Heart right ventricle (tissue), 16 donors: ENCODE measurements at regions of chr7 and their contacts with region 1.

Region 1: GRCh38 chr7:156969972-156970420 is 20.5 kb downstream of the NOM1 start:
- DNase-seq: no peak
- ATAC-seq: peak in 1 of 8 donors; percentile 40
- H3K4me3 ChIP-seq: no peak overlapping the region
- H3K27ac ChIP-seq: no peak overlapping the region
- H3K4me1 ChIP-seq: no peaks in the 10 kb centered on the region
- H3K27me3 ChIP-seq: no peaks in the 10 kb centered on the region
- CTCF ChIP-seq: peak in 8 of 9 donors; percentile 16 to 55 (median 43)

Region 2: DNA sequence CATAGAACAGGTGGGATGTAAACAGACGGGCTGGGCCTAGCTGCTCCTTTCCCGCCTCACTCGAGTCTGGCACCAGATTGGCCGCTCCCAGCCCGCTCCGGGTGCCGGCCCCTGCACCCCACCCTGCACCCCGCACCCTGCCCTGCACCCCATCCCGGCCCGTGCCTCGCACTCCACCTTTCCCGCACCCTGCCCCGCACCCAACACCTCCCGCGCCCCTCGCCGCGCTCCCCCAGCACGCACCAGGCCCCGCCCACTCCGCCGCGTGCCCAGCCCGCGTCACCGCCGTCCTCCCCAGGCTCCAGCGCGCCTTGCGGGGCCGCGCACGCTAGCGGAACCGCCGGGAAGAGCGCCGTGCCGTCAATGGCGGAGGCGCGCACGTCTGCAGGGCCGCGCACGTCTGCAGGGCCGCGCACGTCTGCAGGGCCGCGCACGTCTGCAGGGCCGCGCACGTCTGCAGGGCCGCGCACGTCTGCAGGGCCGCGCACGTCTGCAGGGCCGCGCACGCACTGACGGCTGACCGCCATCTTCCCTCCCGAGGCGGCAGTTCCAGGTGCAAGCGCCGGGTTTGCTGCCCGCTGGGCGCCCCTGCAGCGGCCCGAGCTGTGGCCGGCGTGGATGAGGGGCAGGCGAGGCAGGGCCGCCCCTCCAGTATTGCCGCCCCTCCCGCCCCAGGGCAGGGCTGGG is 168.6 kb after region 1 on chr7 and contains the start of gene UBE3C:
- intact Hi-C with region 1: loop called in 1 of 10 experiments (anchors 10 kb)
- DNase-seq: peak; percentile 90 to 94
- ATAC-seq: peak; percentile 95 to 97 (median 96)
- H3K4me3 ChIP-seq: peak within 1 kb of the TSS; percentile 64 to 89 (median 82)
- H3K27ac ChIP-seq: peak within 1 kb of the TSS; percentile 80 to 96 (median 88)
- H3K4me1 ChIP-seq: peaks cover 4 to 46% (median 29%) of the 10 kb centered on the region in 9 donors
- H3K27me3 ChIP-seq: no peaks in the 10 kb centered on the region
- CTCF ChIP-seq: peak in 2 of 9 donors; percentile 8 to 10
- total RNA-seq, gene UBE3C: 39.0 to 53.8 (median 49.1) TPM

Region 3: DNA sequence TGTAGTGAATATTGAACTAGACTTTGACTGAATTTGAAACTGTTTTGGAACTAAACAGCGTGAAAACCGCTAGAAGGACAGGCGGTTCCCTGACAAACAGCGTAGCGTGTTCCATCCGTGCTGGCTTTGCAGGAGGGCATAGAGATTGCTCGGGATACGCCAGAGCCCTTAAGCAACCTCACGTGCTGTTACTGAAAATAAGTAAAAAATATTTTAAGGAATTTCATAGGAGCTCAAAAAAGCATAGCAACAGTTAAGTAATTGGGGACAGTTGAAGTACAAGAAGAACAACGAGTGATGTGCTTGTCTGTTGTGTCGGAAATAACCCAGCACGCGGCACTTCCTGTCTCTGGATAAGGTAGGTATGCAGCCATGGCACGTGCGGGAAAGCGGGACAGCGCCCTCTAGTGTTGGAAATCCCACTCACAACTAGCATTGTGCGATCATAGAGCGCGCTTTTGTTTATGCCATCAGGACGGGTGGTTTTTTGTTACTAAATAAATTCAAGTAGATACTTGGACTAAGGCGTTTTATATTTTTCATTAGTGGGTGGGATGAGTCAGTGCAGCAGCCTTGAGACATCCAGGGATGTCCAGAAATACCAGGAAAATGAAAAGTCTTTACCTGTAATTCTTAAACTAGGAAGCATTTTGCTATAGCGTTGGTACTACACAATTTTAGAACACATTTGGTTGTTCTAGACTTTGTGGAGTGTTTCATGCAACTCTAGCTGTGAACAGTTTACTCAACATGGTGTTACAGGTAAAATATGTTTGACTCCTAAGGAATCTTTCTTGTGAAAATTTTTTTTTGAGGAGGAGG is 417.2 kb after region 1 on chr7:
- intact Hi-C with region 1: loop called in 1 of 10 experiments (anchors 10 kb)
- DNase-seq: peak; percentile 79 to 89
- ATAC-seq: peak; percentile 76 to 93 (median 88)
- H3K4me3 ChIP-seq: no peak overlapping the region
- H3K27ac ChIP-seq: peak overlapping the region; percentile 28 to 76 (median 58)
- H3K4me1 ChIP-seq: peaks cover 0 to 59% (median 44%) of the 10 kb centered on the region in 9 donors
- H3K27me3 ChIP-seq: no peaks in the 10 kb centered on the region
- CTCF ChIP-seq: peak; percentile 88 to 97 (median 93)